Activated naive CD4-positive, alpha-beta T cell treated with anti-CD3 and anti-CD28 coated beads for 36 hours (primary cell): ENCODE measurements at regions of chr2 and their contacts with region 1.

Region 1: DNA sequence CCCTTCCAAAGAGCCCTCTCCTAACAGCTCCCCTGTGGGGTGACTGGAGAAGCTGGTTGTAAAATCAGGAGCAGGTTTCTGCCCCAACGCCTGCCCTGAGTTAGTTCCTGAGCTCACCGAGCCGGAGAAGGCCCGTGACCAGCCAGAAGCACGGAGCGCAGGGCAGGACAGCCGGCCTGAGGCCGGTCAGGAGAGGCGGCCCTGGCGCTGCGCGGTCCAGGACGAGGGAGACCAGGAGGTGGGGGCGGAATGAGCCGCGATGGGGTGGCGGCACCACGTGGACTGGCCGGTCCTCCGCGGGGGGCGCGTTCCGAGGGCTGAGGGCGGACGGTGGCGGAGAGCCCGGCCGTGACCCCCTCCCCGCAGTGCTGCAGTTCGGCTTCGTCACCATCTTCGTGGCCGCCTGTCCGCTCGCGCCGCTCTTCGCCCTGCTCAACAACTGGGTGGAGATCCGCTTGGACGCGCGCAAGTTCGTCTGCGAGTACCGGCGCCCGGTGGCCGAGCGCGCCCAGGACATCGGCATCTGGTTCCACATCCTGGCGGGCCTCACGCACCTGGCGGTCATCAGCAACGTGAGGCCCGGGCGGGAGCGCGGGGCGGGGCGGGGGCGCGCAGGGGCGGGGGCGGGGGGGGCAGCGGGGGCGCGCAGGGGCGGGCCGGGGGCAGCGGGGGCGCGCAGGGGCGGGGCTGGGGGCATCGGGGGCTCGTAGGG is 29.0 kb downstream of the ANO7 start:
- DNase-seq: peak; percentile 17
- H3K4me3 Mint-ChIP-seq: peak overlapping the region; percentile 61
- H3K27ac Mint-ChIP-seq: no peak overlapping the region
- H3K4me1 Mint-ChIP-seq: peaks cover 8% of the 10 kb centered on the region
- H3K27me3 Mint-ChIP-seq: peaks cover 9% of the 10 kb centered on the region

Region 2: GRCh38 chr2:240851078-240851991 is 366.1 kb before region 1 on chr2:
- CTCF ChIA-PET with region 1: no interaction called
- intact Hi-C with region 1: loop called (anchors 10 kb)
- DNase-seq: peak; percentile 92
- H3K4me3 Mint-ChIP-seq: no peak overlapping the region
- H3K27ac Mint-ChIP-seq: no peak overlapping the region
- H3K4me1 Mint-ChIP-seq: no peaks in the 10 kb centered on the region
- H3K27me3 Mint-ChIP-seq: no peaks in the 10 kb centered on the region

Region 3: GRCh38 chr2:241081643-241082340 is 135.7 kb before region 1 on chr2:
- CTCF ChIA-PET with region 1: no interaction called
- intact Hi-C with region 1: loop called (anchors 1 kb)
- DNase-seq: no peak
- H3K4me3 Mint-ChIP-seq: no peak overlapping the region
- H3K27ac Mint-ChIP-seq: peak overlapping the region; percentile 24
- H3K4me1 Mint-ChIP-seq: peaks cover 7% of the 10 kb centered on the region
- H3K27me3 Mint-ChIP-seq: no peaks in the 10 kb centered on the region